ENCODE measurements at regions of chr10 and their contacts with region 1.

Region 1: GRCh38 chr10:104291439-104291951 is 22.5 kb downstream of the GSTO2 start:
- DNase-seq: peak; percentile 87 to 95 (median 91)
- H3K4me3 ChIP-seq: no peak overlapping the region
- H3K27ac ChIP-seq: no peak overlapping the region
- H3K4me1 ChIP-seq: peaks cover 0 to 6% (median 0%) of the 10 kb centered on the region in 3 donors
- H3K27me3 ChIP-seq: no peaks in the 10 kb centered on the region
- CTCF ChIP-seq: peak; percentile 99

Region 2: GRCh38 chr10:104197364-104197763 is 94.1 kb before region 1 on chr10:
- intact Hi-C with region 1: no loop called
- DNase-seq: no peak
- H3K4me3 ChIP-seq: no peak overlapping the region
- H3K27ac ChIP-seq: no peak overlapping the region
- H3K4me1 ChIP-seq: peaks cover 0 to 7% (median 0%) of the 10 kb centered on the region in 3 donors
- H3K27me3 ChIP-seq: no peaks in the 10 kb centered on the region
- CTCF ChIP-seq: no peak

Region 3: DNA sequence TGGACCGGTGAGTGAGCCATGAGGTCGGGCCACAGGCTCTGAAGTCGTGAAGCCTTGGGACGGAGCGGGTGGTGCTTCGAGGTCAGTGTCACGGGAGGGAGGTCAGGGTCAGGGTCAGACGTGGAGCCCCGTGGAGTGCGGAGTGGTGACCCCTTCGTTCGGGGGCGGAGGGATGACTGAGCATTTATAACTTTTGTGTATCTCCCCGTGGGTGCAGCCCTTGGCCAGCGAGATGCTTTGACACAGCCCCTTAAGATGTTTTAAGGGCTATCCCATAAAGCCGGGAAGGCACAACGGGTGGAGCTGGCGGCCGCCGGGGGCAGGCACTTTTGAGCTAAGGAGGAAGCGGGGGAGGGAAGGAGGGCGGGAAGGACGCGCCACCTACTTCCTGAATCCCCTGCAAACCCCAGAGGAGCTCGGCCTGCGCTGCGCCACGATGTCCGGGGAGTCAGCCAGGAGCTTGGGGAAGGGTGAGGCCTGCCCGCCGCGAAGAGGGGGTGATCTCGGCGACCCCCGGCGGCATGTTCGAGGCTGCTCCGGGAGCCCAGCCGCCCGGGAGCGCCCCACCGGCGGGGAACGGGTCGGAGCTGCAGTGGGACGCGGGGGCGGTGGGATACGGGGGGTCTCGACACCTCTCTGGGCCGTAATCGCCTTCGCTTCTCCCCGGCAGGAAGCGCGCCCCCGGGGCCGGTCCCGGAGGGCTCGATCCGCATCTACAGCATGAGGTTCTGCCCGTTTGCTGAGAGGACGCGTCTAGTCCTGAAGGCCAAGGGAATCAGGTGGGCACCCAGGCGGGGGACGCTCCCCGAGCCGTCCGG is 36.8 kb before region 1 on chr10 and contains the start of gene GSTO1:
- intact Hi-C with region 1: no loop called
- DNase-seq: peak; percentile 67 to 94 (median 81)
- H3K4me3 ChIP-seq: peak within 1 kb of the TSS; percentile 67 to 84 (median 82)
- H3K27ac ChIP-seq: peak within 1 kb of the TSS; percentile 91 to 97
- H3K4me1 ChIP-seq: peaks cover 0 to 23% (median 17%) of the 10 kb centered on the region in 3 donors
- H3K27me3 ChIP-seq: no peaks in the 10 kb centered on the region
- CTCF ChIP-seq: peak; percentile 1
- total RNA-seq, gene GSTO1: 83.7 TPM

Region 4: GRCh38 chr10:104353325-104354048 is 62.0 kb after region 1 on chr10 and contains the start of gene CFAP58:
- intact Hi-C with region 1: loop called (anchors 5 kb)
- DNase-seq: peak; percentile 94 to 98 (median 97)
- H3K4me3 ChIP-seq: peak within 1 kb of the TSS; percentile 73 to 86 (median 75)
- H3K27ac ChIP-seq: peak within 1 kb of the TSS in 1 of 2 donors; percentile 22
- H3K4me1 ChIP-seq: peaks cover 0 to 11% (median 0%) of the 10 kb centered on the region in 3 donors
- H3K27me3 ChIP-seq: no peaks in the 10 kb centered on the region
- CTCF ChIP-seq: peak; percentile 73
- total RNA-seq, gene CFAP58: 0.35 TPM